CD8-positive, alpha-beta T cell (primary cell): ENCODE measurements at regions of chr13 and their contacts with region 1.

Region 1: DNA sequence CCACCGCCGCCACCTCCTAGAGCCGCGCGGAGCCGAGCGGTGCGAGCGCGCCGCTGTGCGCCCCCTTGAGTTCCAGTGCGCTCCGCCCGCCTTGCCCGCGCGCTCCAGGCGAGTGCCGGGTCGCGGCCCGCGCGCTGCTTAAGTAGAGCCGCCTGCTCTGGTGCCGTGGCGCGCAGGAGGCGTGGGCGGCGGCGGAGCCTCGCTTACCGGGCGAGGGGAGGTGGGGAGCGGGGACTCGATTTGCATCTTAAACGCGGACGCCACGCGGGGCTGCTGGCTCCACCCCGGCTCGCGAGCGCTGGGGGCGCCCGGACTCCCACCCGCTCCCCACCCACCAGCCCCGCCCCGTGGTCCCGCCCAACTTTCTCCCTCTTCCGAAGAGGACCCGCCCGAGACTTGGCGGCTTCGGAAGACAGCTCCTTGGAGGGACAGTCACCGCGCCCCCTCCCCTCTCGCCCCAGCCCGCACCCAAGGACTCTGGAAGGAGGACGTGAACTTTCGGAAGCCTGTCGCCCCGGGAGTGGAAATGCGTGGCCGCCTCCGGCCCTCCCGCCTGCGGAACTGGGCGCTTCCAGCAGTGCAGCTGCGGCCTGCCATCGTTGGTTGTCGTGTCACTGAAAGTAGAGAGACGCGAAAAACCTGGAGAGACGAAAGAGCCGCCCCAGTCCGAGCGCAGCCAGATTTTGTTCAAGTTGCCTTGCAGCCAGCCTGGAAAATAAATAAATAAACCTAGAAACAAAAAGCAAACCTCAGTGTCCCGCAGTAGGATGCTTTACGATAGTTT is at the start of gene KCTD12:
- DNase-seq: peak; percentile 54 to 87 (median 77)
- ATAC-seq: peak; percentile 78
- H3K4me3 ChIP-seq: peak within 1 kb of the TSS; percentile 69 to 82
- H3K4me3 Mint-ChIP-seq: peak within 1 kb of the TSS; percentile 86
- H3K27ac ChIP-seq: peak within 1 kb of the TSS in 1 of 2 experiments; percentile 49
- H3K27ac Mint-ChIP-seq: peak within 1 kb of the TSS; percentile 83
- H3K4me1 ChIP-seq: peaks cover 28% of the 10 kb centered on the region
- H3K4me1 Mint-ChIP-seq: peaks cover 25% of the 10 kb centered on the region
- H3K27me3 ChIP-seq: peaks cover 0 to 14% of the 10 kb centered on the region in 2 experiments
- H3K27me3 Mint-ChIP-seq: peaks cover 12% of the 10 kb centered on the region
- CTCF ChIP-seq: no peak
- total RNA-seq, gene KCTD12: 2.4 to 2.6 TPM

Region 2: DNA sequence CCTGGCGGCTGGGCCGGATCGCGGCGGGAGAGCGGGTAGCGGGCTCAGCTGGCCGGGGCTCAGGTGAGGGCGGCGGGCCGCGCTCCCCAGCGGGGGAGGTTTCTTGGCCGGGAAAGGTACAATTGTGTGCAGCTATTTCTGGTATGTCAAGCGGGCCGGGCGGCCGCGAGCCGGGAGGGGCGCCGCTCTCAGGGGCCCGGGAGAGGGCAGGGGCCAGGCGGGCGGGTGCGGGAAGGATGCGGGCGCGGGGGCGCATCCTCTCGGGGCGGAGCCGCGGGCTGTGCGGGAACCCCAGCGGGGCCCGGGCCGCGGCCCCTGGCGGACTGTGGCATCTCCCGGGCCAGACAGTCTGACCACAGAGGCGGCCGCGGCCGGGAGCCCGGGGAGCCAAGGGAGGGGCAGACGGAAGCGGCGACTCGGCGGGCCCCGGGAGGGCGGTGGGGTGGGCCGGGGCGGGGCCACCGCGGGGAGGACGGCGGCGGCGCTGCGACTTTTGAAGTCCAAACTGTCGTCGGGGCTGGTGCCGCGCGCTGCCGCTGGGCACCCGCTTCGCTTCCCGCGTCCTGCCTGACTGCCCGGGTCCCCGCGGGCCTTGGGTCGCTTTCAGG is 1250.6 kb before region 1 on chr13 and contains the start of gene LMO7:
- CTCF ChIA-PET with region 1: no interaction called
- POLR2A ChIA-PET with region 1: no interaction called
- intact Hi-C with region 1: loop called in 1 of 2 experiments (anchors 5 kb)
- DNase-seq: peak in 8 of 9 experiments; percentile 19 to 75 (median 52)
- ATAC-seq: peak; percentile 57
- H3K4me3 ChIP-seq: peak within 1 kb of the TSS; percentile 65 to 82
- H3K4me3 Mint-ChIP-seq: peak within 1 kb of the TSS; percentile 84
- H3K27ac ChIP-seq: no peak within 1 kb of the TSS
- H3K27ac Mint-ChIP-seq: peak within 1 kb of the TSS; percentile 79
- H3K4me1 ChIP-seq: peaks cover 3% of the 10 kb centered on the region
- H3K4me1 Mint-ChIP-seq: peaks cover 20% of the 10 kb centered on the region
- H3K27me3 ChIP-seq: no peaks in the 10 kb centered on the region
- H3K27me3 Mint-ChIP-seq: peaks cover 7% of the 10 kb centered on the region
- CTCF ChIP-seq: no peak
- total RNA-seq, gene LMO7: 26.4 to 27.2 TPM

Region 3: DNA sequence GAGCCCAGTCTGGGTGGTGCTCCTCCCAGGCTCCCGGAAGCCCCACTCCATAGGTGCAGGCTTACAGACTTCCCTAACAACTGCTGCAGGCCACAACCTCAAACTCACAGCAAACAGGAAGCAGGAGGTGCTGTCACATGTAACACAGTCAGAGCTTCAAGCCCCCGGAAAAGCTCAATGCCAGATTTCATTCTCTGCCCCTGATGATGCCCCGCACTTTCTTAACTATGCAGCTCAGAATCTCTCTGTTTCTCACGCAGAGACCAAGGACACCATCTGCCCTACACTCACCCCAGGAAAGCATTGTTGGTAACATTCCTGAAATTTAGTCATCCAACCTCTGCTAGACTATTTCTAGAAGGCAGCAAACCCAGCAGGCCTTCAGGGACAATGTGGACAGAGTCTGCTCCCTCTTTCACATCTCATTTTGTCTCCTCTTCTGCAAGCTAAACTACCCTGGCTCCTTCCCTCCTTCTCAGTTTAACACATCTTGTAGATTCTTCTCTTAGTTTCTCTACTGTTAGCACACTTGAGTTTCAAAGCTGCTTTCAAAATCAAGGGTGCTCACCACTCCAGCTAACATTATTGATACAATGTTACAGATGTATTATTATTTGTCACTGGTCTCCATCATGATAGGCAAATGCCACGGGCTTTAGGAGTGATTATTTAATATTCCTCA is 162.8 kb before region 1 on chr13:
- CTCF ChIA-PET with region 1: interaction called, 6 read pairs
- POLR2A ChIA-PET with region 1: interaction called, 3 read pairs
- intact Hi-C with region 1: loop called in 1 of 2 experiments (anchors 2 kb)
- DNase-seq: peak in 8 of 9 experiments; percentile 2 to 60 (median 22)
- ATAC-seq: peak; percentile 78
- H3K4me3 ChIP-seq: no peak overlapping the region
- H3K4me3 Mint-ChIP-seq: no peak overlapping the region
- H3K27ac ChIP-seq: peak overlapping the region; percentile 6 to 40
- H3K27ac Mint-ChIP-seq: no peak overlapping the region
- H3K4me1 ChIP-seq: peaks cover 19% of the 10 kb centered on the region
- H3K4me1 Mint-ChIP-seq: no peaks in the 10 kb centered on the region
- H3K27me3 ChIP-seq: no peaks in the 10 kb centered on the region
- H3K27me3 Mint-ChIP-seq: no peaks in the 10 kb centered on the region
- CTCF ChIP-seq: no peak

Region 4: DNA sequence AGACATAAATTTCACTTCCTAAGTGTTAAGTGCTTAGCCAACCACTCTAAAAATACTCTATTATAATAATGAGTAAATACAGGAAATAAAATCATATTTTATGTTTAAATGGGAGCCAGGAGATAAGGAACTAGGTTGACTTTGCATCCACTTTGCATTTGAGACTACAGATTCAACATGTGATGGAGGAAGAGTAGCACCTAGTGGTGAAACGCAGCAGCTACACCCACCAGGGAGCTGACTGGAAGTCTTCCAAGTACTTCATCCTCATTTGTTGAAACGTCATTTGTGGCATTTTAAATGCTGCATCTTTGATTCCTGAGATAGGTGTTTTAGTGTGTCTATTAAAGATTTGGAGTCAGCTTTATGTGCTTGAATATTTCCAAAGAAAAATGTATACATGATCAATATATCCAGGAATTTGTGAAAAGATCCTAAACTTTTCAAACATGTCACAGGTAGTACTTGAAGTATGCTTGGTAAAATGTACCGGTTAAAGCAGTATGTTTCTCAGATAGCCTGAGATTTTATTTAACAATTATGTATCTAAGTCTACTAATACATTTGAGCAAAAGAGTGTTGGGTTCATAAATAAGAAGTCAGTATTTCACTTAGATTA is 17.2 kb after region 1 on chr13:
- CTCF ChIA-PET with region 1: interaction called, 9 read pairs
- POLR2A ChIA-PET with region 1: interaction called, 5 read pairs
- intact Hi-C with region 1: loop called in 1 of 2 experiments (anchors 1 kb)
- DNase-seq: peak; percentile 38 to 78 (median 71)
- ATAC-seq: peak; percentile 92
- H3K4me3 ChIP-seq: no peak overlapping the region
- H3K4me3 Mint-ChIP-seq: no peak overlapping the region
- H3K27ac ChIP-seq: no peak overlapping the region
- H3K27ac Mint-ChIP-seq: no peak overlapping the region
- H3K4me1 ChIP-seq: no peaks in the 10 kb centered on the region
- H3K4me1 Mint-ChIP-seq: no peaks in the 10 kb centered on the region
- H3K27me3 ChIP-seq: no peaks in the 10 kb centered on the region
- H3K27me3 Mint-ChIP-seq: peaks cover 14% of the 10 kb centered on the region
- CTCF ChIP-seq: peak; percentile 99

Region 5: GRCh38 chr13:76954538-76954937 is 68.1 kb after region 1 on chr13:
- CTCF ChIA-PET with region 1: no interaction called
- POLR2A ChIA-PET with region 1: no interaction called
- intact Hi-C with region 1: no loop called
- DNase-seq: no peak
- ATAC-seq: no peak
- H3K4me3 ChIP-seq: no peak overlapping the region
- H3K4me3 Mint-ChIP-seq: no peak overlapping the region
- H3K27ac ChIP-seq: no peak overlapping the region
- H3K27ac Mint-ChIP-seq: no peak overlapping the region
- H3K4me1 ChIP-seq: no peaks in the 10 kb centered on the region
- H3K4me1 Mint-ChIP-seq: no peaks in the 10 kb centered on the region
- H3K27me3 ChIP-seq: no peaks in the 10 kb centered on the region
- H3K27me3 Mint-ChIP-seq: peaks cover 24% of the 10 kb centered on the region
- CTCF ChIP-seq: no peak

Region 6: GRCh38 chr13:77329133-77329910 is 442.8 kb after region 1 on chr13:
- CTCF ChIA-PET with region 1: no interaction called
- POLR2A ChIA-PET with region 1: no interaction called
- intact Hi-C with region 1: loop called in 1 of 2 experiments (anchors 1 kb)
- DNase-seq: peak; percentile 75 to 99 (median 88)
- ATAC-seq: peak; percentile 65
- H3K4me3 ChIP-seq: peak overlapping the region; percentile 81 to 98
- H3K4me3 Mint-ChIP-seq: peak overlapping the region; percentile 91
- H3K27ac ChIP-seq: peak overlapping the region; percentile 64 to 85
- H3K27ac Mint-ChIP-seq: peak overlapping the region; percentile 97
- H3K4me1 ChIP-seq: peaks cover 42% of the 10 kb centered on the region
- H3K4me1 Mint-ChIP-seq: peaks cover 49% of the 10 kb centered on the region
- H3K27me3 ChIP-seq: no peaks in the 10 kb centered on the region
- H3K27me3 Mint-ChIP-seq: no peaks in the 10 kb centered on the region
- CTCF ChIP-seq: no peak

Region 7: DNA sequence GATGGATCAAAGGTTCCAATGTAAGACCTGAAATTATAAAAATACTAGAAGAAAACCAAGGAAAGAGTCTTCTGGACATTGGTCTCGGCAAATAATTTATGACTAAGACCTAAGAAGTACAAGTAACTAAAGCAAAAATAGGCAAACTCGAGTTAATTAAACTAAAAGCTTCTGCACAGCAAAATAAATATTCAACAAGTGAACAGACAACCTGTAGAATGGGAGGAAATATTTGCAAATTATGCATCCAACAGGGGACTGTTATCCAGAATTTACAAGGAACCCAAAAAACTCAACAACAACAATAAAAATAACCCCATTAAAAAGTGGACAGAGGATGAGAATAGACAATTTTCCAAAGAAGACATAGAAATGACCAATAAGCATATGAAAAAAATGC is 801.3 kb after region 1 on chr13:
- CTCF ChIA-PET with region 1: no interaction called
- POLR2A ChIA-PET with region 1: no interaction called
- intact Hi-C with region 1: no loop called
- DNase-seq: no peak
- ATAC-seq: no peak
- H3K4me3 ChIP-seq: no peak overlapping the region
- H3K4me3 Mint-ChIP-seq: no peak overlapping the region
- H3K27ac ChIP-seq: no peak overlapping the region
- H3K27ac Mint-ChIP-seq: no peak overlapping the region
- H3K4me1 ChIP-seq: no peaks in the 10 kb centered on the region
- H3K4me1 Mint-ChIP-seq: no peaks in the 10 kb centered on the region
- H3K27me3 ChIP-seq: no peaks in the 10 kb centered on the region
- H3K27me3 Mint-ChIP-seq: no peaks in the 10 kb centered on the region
- CTCF ChIP-seq: no peak